Adrenal gland (tissue), 19 donors: ENCODE measurements at regions of chr1 and their contacts with region 1.

Region 1: DNA sequence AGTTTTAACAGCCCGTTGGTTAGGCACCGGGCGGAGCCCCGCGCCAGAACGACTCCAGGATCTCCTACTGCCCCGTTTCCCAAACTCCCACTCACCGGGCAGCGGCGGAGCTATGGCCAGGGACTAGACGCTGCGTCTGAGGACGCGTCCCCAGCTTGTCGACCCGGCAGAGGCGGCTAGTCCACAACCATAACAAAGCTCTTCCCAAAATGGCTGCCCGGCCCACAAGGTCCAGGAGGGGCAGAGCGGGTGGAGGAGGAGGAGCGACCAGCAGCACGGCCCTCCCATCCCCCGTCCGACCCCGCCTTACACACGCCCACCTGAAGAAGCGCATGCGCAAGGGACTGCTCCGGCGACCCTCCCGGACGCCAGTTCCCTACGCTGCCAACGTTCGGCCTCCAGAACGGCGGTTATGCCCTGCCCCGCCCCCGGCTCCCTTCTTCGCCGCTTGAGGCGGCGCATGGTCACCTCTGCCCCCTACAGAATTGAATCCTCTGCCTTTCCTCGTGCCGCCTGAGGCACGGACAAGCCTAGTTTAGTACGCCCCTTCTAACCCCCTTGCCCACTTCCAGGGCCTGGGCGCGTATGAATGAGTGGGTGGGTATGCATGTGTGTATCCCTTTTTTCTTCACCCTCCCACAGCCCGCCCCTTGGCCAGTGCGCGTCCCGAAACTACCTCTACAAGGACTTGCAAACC is at the start of gene GPBP1L1:
- DNase-seq: peak; percentile 98 to 99 (median 98)
- H3K4me3 ChIP-seq: peak within 1 kb of the TSS; percentile 56 to 91 (median 74)
- H3K27ac ChIP-seq: peak within 1 kb of the TSS; percentile 93 to 100 (median 98)
- H3K4me1 ChIP-seq: peaks cover 16 to 53% of the 10 kb centered on the region in 2 donors
- H3K27me3 ChIP-seq: no peaks in the 10 kb centered on the region
- CTCF ChIP-seq: no peak
- POLR2A ChIP-seq: peak in 1 of 2 donors; percentile 34
- total RNA-seq, gene GPBP1L1: 57.9 to 122 (median 82.6) TPM

Region 2: GRCh38 chr1:45569962-45570581 is 116.4 kb before region 1 on chr1:
- intact Hi-C with region 1: no loop called
- DNase-seq: peak; percentile 66 to 93 (median 81)
- H3K4me3 ChIP-seq: no peak overlapping the region
- H3K27ac ChIP-seq: peak overlapping the region in 1 of 5 donors; percentile 22
- H3K4me1 ChIP-seq: peaks cover 0 to 8% of the 10 kb centered on the region in 2 donors
- H3K27me3 ChIP-seq: no peaks in the 10 kb centered on the region
- CTCF ChIP-seq: peak; percentile 95 to 99 (median 98)
- POLR2A ChIP-seq: no peak

Region 3: GRCh38 chr1:45583264-45583665 is 103.2 kb before region 1 on chr1:
- intact Hi-C with region 1: loop called in 1 of 2 experiments (anchors 10 kb)
- DNase-seq: peak; percentile 94 to 99 (median 98)
- H3K4me3 ChIP-seq: peak overlapping the region; percentile 13 to 89 (median 84)
- H3K27ac ChIP-seq: peak overlapping the region; percentile 57 to 95 (median 90)
- H3K4me1 ChIP-seq: peaks cover 13 to 24% of the 10 kb centered on the region in 2 donors
- H3K27me3 ChIP-seq: no peaks in the 10 kb centered on the region
- CTCF ChIP-seq: no peak
- POLR2A ChIP-seq: no peak

Region 4: GRCh38 chr1:45635211-45635610 is 51.3 kb before region 1 on chr1:
- intact Hi-C with region 1: loop called in 1 of 2 experiments (anchors 10 kb)
- DNase-seq: no peak
- H3K4me3 ChIP-seq: no peak overlapping the region
- H3K27ac ChIP-seq: peak overlapping the region in 2 of 5 donors; percentile 14 to 38
- H3K4me1 ChIP-seq: peaks cover 6 to 16% of the 10 kb centered on the region in 2 donors
- H3K27me3 ChIP-seq: no peaks in the 10 kb centered on the region
- CTCF ChIP-seq: no peak
- POLR2A ChIP-seq: no peak

Region 5: GRCh38 chr1:45876000-45876617 is 189.6 kb after region 1 on chr1:
- intact Hi-C with region 1: no loop called
- DNase-seq: no peak
- H3K4me3 ChIP-seq: no peak overlapping the region
- H3K27ac ChIP-seq: no peak overlapping the region
- H3K4me1 ChIP-seq: no peaks in the 10 kb centered on the region
- H3K27me3 ChIP-seq: no peaks in the 10 kb centered on the region
- CTCF ChIP-seq: no peak
- POLR2A ChIP-seq: no peak